Activated T-helper 1 cell treated with anti-CD3 and anti-CD28 coated beads, Interleukin-12 subunit alpha, Interleukin-12 subunit beta, Interleukin-2, Interleukin-4 antibody, amounts not matched to agents 30 ng/mL and 10 ng/mL and 1 ng/mL, durations not matched to agents 14 hours and 24 hours and 36 hours (primary cell): ENCODE measurements at regions of chr13 and their contacts with region 1.

Region 1: GRCh38 chr13:26186118-26186870 is 35.8 kb downstream of the RNF6 start:
- DNase-seq: peak; percentile 89
- H3K4me3 Mint-ChIP-seq: peak overlapping the region; percentile 86
- H3K27ac Mint-ChIP-seq: peak overlapping the region; percentile 97
- H3K4me1 Mint-ChIP-seq: peaks cover 25% of the 10 kb centered on the region
- H3K27me3 Mint-ChIP-seq: no peaks in the 10 kb centered on the region

Region 2: DNA sequence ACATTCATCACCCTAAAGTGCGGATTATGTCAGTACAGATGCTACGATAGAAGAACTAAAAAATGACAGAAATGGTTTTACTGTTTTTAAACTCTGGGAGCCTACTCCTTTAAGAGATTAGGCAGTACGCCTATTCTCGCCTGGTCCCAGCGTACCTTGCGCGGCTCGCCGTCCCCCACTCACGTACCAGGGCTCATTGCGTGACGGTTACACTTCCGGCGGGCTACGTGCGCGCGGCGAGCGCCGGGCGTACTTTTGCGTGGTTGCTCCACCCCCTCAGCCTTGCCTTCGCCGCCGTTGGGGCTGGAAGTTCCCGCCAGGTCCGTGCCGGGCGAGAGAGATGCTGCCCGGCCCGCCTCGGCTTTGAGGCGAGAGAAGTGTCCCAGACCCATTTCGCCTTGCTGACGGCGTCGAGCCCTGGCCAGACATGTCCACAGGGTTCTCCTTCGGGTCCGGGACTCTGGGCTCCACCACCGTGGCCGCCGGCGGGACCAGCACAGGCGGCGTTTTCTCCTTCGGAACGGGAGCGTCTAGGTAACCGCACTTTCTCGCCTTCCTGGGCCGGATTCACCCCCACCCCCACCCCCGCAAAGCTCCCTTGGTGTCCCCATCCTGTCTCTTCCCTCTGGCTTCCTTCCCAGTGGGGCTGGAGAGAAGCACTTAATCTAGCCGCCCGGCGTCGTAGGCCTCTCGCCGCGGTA is 884.8 kb before region 1 on chr13 and contains the start of gene NUP58:
- intact Hi-C with region 1: loop called (anchors 10 kb)
- DNase-seq: peak; percentile 94
- H3K4me3 Mint-ChIP-seq: peak within 1 kb of the TSS; percentile 96
- H3K27ac Mint-ChIP-seq: peak within 1 kb of the TSS; percentile 94
- H3K4me1 Mint-ChIP-seq: peaks cover 35% of the 10 kb centered on the region
- H3K27me3 Mint-ChIP-seq: peaks cover 5% of the 10 kb centered on the region
- total RNA-seq, gene NUP58: 131 and 142 TPM in 2 replicates

Region 3: GRCh38 chr13:26221721-26222519 is 35.6 kb after region 1 on chr13 and contains the start of gene RNF6:
- intact Hi-C with region 1: loop called (anchors 1 kb)
- DNase-seq: peak; percentile 83
- H3K4me3 Mint-ChIP-seq: peak within 1 kb of the TSS; percentile 99
- H3K27ac Mint-ChIP-seq: peak within 1 kb of the TSS; percentile 100
- H3K4me1 Mint-ChIP-seq: peaks cover 38% of the 10 kb centered on the region
- H3K27me3 Mint-ChIP-seq: no peaks in the 10 kb centered on the region
- total RNA-seq, gene RNF6: 53.2 and 54.9 TPM in 2 replicates

Region 4: GRCh38 chr13:26323764-26324163 is 137.5 kb after region 1 on chr13:
- intact Hi-C with region 1: no loop called
- DNase-seq: no peak
- H3K4me3 Mint-ChIP-seq: no peak overlapping the region
- H3K27ac Mint-ChIP-seq: no peak overlapping the region
- H3K4me1 Mint-ChIP-seq: peaks cover 22% of the 10 kb centered on the region
- H3K27me3 Mint-ChIP-seq: no peaks in the 10 kb centered on the region

Region 5: GRCh38 chr13:26406791-26407190 is 220.5 kb after region 1 on chr13:
- intact Hi-C with region 1: loop called (anchors 10 kb)
- DNase-seq: no peak
- H3K4me3 Mint-ChIP-seq: no peak overlapping the region
- H3K27ac Mint-ChIP-seq: no peak overlapping the region
- H3K4me1 Mint-ChIP-seq: no peaks in the 10 kb centered on the region
- H3K27me3 Mint-ChIP-seq: no peaks in the 10 kb centered on the region

Region 6: DNA sequence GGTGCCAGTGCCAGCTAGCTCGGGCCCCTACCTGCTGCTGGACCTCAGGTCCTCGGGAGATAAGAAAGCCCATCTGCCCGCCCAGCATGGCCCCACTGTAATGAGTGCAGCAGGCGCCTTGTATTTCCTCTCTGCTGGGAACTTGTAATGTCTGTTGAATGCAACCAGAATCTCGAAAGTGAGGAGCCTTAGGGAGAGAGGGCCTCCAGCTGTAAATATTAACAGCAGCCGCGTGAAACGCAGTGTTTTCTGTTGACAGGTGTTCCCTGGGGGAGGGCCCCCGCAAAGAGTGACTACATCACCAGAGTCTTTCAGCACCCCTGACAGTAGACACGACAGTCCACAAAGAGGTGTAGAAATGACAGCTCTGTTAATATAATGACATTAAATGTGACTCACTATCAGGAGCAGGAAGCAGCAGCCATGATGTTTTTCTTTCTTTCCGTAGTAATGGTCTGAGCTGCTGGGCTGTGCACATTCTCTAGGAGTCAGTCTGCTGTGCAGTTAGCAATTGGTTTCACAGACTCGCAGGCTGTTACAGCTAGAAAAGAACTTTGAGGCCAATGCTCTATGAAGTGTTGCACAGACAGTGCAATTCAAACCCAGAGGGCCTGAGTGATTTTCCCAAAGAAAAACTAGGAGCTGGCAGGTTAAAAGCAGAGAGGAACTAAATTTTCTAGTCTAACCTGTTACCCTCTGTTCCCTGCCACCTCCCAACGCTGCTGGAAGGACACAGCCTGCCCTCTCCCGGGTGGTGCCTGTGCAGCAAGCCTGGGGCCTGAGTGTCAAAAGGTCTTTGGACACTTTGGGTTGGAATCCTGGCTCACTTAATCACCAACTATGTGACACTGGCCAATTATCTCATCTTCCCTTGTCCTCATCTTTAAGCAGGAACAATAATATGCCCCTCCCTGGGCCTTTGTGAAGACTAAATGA is 312.6 kb after region 1 on chr13:
- intact Hi-C with region 1: loop called (anchors 1 kb)
- DNase-seq: no peak
- H3K4me3 Mint-ChIP-seq: no peak overlapping the region
- H3K27ac Mint-ChIP-seq: no peak overlapping the region
- H3K4me1 Mint-ChIP-seq: peaks cover 4% of the 10 kb centered on the region
- H3K27me3 Mint-ChIP-seq: peaks cover 3% of the 10 kb centered on the region

Region 7: GRCh38 chr13:26698392-26699196 is 512.3 kb after region 1 on chr13:
- intact Hi-C with region 1: loop called (anchors 1 kb)
- DNase-seq: peak; percentile 68
- H3K4me3 Mint-ChIP-seq: no peak overlapping the region
- H3K27ac Mint-ChIP-seq: no peak overlapping the region
- H3K4me1 Mint-ChIP-seq: peaks cover 6% of the 10 kb centered on the region
- H3K27me3 Mint-ChIP-seq: peaks cover 6% of the 10 kb centered on the region